ENCODE measurements at regions of chr10 and their contacts with region 1.

Region 1: DNA sequence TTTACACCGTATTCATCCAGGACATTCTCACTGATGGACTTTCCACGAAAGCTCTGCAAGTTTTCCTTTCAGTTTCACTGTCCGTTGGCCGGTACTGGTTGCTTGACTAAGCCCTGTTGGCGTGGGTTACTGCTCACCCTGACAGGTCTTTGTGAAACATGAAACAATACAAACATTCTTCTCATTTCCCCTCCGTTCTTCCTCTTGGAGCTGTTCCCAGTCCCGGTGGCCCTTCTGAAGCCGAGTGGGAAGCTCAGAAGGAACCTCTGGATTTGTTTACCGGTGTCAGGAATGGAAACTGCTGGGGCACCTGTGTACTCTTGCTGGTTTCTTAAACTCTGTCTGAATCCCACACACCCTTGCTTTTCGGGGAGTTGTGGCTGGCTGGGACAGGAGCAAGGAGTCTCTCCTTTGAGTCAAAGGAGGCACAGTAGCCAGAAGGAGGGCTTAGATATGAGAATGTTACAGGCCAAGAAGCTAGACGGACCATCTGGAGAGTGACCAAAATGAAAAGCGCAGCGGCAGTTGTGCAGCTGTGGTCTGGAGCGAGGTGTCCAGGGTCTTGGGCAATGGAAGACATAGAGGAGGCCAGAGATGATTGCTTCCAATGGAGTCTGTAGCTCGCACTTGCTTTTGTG is 45.7 kb downstream of the LYZL2 start:
- DNase-seq: peak; percentile 31 to 60 (median 58)
- H3K4me3 ChIP-seq: peak overlapping the region in 6 of 7 experiments; percentile 46 to 82 (median 56)
- H3K27ac ChIP-seq: peak overlapping the region; percentile 46 to 81
- H3K4me1 ChIP-seq: peaks cover 9 to 37% (median 23%) of the 10 kb centered on the region in 4 experiments
- H3K27me3 ChIP-seq: no peaks in the 10 kb centered on the region

Region 2: GRCh38 chr10:30392564-30392990 is 191.3 kb before region 1 on chr10:
- CTCF ChIA-PET with region 1: interaction called, 77 read pairs
- POLR2A ChIA-PET with region 1: no interaction called
- DNase-seq: peak; percentile 59 to 76 (median 72)
- H3K4me3 ChIP-seq: peak overlapping the region in 4 of 7 experiments; percentile 32 to 75 (median 59)
- H3K27ac ChIP-seq: no peak overlapping the region
- H3K4me1 ChIP-seq: peaks cover 0 to 7% (median 4%) of the 10 kb centered on the region in 4 experiments
- H3K27me3 ChIP-seq: no peaks in the 10 kb centered on the region

Region 3: DNA sequence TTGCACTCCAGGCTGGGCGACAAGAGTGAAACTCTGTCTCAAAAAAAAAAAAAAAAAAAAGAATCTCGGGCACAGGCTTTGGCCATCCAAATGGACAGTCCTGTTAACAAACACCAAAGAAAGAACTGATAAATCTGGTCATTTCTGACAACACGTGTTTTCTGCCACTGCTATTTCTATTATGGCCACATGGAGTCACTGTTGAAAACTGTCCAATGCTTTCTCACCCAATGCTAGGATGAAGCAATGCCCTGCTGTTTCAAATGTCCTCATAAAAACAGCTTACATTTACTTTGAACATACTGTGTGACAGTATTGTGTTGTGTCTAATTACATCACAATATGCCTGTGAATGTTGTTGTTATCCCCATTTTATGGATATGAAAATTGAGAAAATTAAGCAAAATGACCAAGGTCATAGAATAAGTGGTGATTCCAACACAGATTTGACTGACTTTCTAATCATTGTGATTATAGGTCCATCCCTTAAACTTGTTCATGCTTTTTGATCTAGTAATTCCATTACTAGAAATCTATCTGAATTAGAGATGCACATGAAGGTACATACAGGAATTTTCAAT is 169.8 kb before region 1 on chr10:
- CTCF ChIA-PET with region 1: interaction called, 12 read pairs
- POLR2A ChIA-PET with region 1: no interaction called
- DNase-seq: peak; percentile 59 to 82 (median 79)
- H3K4me3 ChIP-seq: no peak overlapping the region
- H3K27ac ChIP-seq: no peak overlapping the region
- H3K4me1 ChIP-seq: peaks cover 5 to 24% (median 14%) of the 10 kb centered on the region in 4 experiments
- H3K27me3 ChIP-seq: no peaks in the 10 kb centered on the region

Region 4: DNA sequence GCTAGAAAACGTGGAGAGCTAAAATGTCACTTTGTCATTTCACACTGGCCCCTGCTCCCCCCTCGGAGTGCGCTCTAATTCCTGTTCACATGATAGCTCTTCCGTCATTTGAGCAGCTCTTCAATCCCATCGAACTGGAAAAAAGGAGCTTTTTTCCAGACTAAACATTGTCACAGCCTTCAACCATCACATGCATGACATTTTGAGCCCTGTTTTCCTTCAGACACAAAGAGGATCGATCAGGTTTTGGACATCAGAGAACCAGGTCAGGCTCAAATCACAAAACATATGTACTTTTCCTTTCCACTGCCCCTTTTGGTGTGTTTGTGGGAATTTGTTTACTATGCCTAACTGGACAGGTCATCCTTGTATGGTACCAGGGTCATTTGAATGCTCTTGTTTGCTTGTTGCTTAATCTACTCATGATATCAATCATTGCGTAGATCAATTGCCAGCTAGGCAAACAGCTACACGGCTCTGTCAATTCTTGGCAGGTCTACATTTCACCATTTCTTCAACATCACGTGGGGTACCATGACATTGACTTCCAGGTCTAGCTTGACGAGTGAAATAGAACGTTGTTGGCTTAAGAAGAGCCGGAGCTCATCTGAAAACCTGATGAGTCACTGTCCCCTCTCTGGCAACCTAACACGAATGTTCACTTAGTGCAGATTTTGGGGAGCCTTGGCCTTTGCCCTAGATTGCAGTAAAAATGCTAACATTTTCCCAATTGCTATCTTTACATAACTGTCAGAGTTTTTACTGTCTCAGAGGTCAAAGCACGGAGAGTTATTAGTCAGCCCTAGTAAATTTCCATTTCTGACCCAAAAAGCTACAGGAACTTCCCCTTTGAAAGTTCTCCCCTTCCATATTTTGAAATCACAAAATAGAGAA is 41.6 kb before region 1 on chr10:
- CTCF ChIA-PET with region 1: interaction called, 15 read pairs
- POLR2A ChIA-PET with region 1: no interaction called
- DNase-seq: peak in 2 of 3 donors; percentile 80 to 86
- H3K4me3 ChIP-seq: no peak overlapping the region
- H3K27ac ChIP-seq: no peak overlapping the region
- H3K4me1 ChIP-seq: peaks cover 2 to 36% (median 26%) of the 10 kb centered on the region in 4 experiments
- H3K27me3 ChIP-seq: no peaks in the 10 kb centered on the region

Region 5: GRCh38 chr10:30553625-30554439 is 30.1 kb before region 1 on chr10:
- CTCF ChIA-PET with region 1: interaction called, 18 read pairs
- POLR2A ChIA-PET with region 1: no interaction called
- DNase-seq: peak in 2 of 3 donors; percentile 35 to 40
- H3K4me3 ChIP-seq: peak overlapping the region in 3 of 7 experiments; percentile 30 to 63 (median 48)
- H3K27ac ChIP-seq: peak overlapping the region in 1 of 2 experiments; percentile 73
- H3K4me1 ChIP-seq: peaks cover 13 to 40% (median 24%) of the 10 kb centered on the region in 4 experiments
- H3K27me3 ChIP-seq: no peaks in the 10 kb centered on the region

Region 6: DNA sequence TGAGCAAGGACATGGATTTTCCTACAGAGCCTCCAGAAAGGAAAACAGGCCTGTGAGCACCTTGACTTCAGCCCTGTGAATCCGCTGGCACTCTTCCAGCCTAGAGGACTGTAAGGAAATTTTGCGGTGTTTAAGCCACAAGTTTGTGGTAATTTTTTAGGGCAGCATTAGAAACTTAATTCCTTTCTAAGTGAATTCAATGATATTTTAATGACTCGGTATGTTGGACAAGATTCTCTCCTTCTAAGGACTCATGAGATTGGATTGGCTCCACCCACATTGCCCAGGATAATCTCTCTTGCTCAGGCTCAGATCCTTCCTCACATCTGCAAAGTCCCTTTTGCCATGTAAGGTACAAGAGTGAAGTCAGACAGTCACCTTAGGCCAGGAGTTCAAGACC is 41.2 kb after region 1 on chr10:
- CTCF ChIA-PET with region 1: no interaction called
- POLR2A ChIA-PET with region 1: no interaction called
- DNase-seq: no peak
- H3K4me3 ChIP-seq: no peak overlapping the region
- H3K27ac ChIP-seq: no peak overlapping the region
- H3K4me1 ChIP-seq: no peaks in the 10 kb centered on the region
- H3K27me3 ChIP-seq: no peaks in the 10 kb centered on the region

Region 7: GRCh38 chr10:30639946-30640786 is 56.3 kb after region 1 on chr10:
- CTCF ChIA-PET with region 1: no interaction called
- POLR2A ChIA-PET with region 1: no interaction called
- DNase-seq: peak; percentile 64 to 86 (median 76)
- H3K4me3 ChIP-seq: no peak overlapping the region
- H3K27ac ChIP-seq: no peak overlapping the region
- H3K4me1 ChIP-seq: no peaks in the 10 kb centered on the region
- H3K27me3 ChIP-seq: peaks cover 3 to 42% (median 13%) of the 10 kb centered on the region in 5 experiments